Activated B cell treated with CpG ODN at 0.5 μM for 24 hours (primary cell): ENCODE measurements at regions of chr18 and their contacts with region 1.

Region 1: GRCh38 chr18:62186774-62187542 is at the starts of genes PIGN and RELCH:
- DNase-seq: peak; percentile 73
- ATAC-seq: peak; percentile 94
- H3K4me3 Mint-ChIP-seq: peak within 1 kb of the TSS; percentile 98
- H3K27ac Mint-ChIP-seq: peak within 1 kb of the TSS; percentile 95
- H3K4me1 Mint-ChIP-seq: peaks cover 58% of the 10 kb centered on the region
- H3K27me3 Mint-ChIP-seq: no peaks in the 10 kb centered on the region
- CTCF ChIP-seq: no peak
- total RNA-seq, gene PIGN: 26.4 and 29.4 TPM in 2 replicates
- total RNA-seq, gene RELCH: 45.4 and 59.0 TPM in 2 replicates

Region 2: GRCh38 chr18:62209046-62209445 is 22.1 kb after region 1 on chr18:
- CTCF ChIA-PET with region 1: no interaction called
- POLR2A ChIA-PET with region 1: no interaction called
- intact Hi-C with region 1: loop called (anchors 2 kb)
- DNase-seq: no peak
- ATAC-seq: no peak
- H3K4me3 Mint-ChIP-seq: no peak overlapping the region
- H3K27ac Mint-ChIP-seq: no peak overlapping the region
- H3K4me1 Mint-ChIP-seq: peaks cover 26% of the 10 kb centered on the region
- H3K27me3 Mint-ChIP-seq: no peaks in the 10 kb centered on the region
- CTCF ChIP-seq: no peak

Region 3: GRCh38 chr18:62287781-62288664 is 101.1 kb after region 1 on chr18:
- CTCF ChIA-PET with region 1: no interaction called
- POLR2A ChIA-PET with region 1: no interaction called
- intact Hi-C with region 1: loop called (anchors 1 kb)
- DNase-seq: no peak
- ATAC-seq: peak; percentile 9
- H3K4me3 Mint-ChIP-seq: peak overlapping the region; percentile 54
- H3K27ac Mint-ChIP-seq: peak overlapping the region; percentile 72
- H3K4me1 Mint-ChIP-seq: peaks cover 26% of the 10 kb centered on the region
- H3K27me3 Mint-ChIP-seq: no peaks in the 10 kb centered on the region
- CTCF ChIP-seq: no peak

Region 4: GRCh38 chr18:62505669-62506494 is 318.9 kb after region 1 on chr18:
- CTCF ChIA-PET with region 1: no interaction called
- POLR2A ChIA-PET with region 1: no interaction called
- intact Hi-C with region 1: loop called (anchors 1 kb)
- DNase-seq: no peak
- ATAC-seq: peak; percentile 84
- H3K4me3 Mint-ChIP-seq: peak overlapping the region; percentile 73
- H3K27ac Mint-ChIP-seq: peak overlapping the region; percentile 92
- H3K4me1 Mint-ChIP-seq: peaks cover 19% of the 10 kb centered on the region
- H3K27me3 Mint-ChIP-seq: no peaks in the 10 kb centered on the region
- CTCF ChIP-seq: no peak

Region 5: DNA sequence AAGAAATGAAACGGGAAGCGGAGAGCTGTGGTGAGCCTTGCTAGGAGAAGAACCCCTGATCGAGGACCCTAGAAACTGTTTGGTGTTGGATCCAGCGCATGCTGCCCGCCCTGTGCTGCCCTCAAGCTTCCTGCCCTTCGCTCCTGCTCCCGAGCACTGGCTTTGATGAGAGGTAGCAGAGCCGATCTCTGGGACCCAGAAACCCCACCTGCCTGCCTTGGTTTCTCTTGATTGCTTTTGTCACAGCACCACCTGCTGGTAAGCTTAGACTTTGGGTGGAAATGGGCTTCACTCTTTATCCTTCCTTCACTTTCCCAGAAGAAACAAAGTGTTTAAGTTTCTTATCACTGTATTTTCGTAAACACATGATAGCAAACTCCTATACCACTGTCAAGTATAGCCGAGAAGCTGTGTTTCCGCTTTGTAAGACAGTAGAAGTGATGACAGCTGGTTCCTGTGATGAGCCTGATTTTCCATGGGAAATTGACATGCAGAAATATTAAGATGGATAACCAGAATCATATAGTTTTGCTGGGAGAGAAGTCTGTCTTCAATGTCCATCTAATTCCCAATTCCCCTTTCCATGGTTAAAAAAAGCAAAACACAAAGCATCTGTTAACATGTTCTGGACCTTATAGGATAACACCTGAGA is 795.8 kb after region 1 on chr18:
- CTCF ChIA-PET with region 1: no interaction called
- POLR2A ChIA-PET with region 1: no interaction called
- intact Hi-C with region 1: loop called (anchors 2 kb)
- DNase-seq: peak; percentile 29
- ATAC-seq: peak; percentile 58
- H3K4me3 Mint-ChIP-seq: no peak overlapping the region
- H3K27ac Mint-ChIP-seq: no peak overlapping the region
- H3K4me1 Mint-ChIP-seq: peaks cover 6% of the 10 kb centered on the region
- H3K27me3 Mint-ChIP-seq: no peaks in the 10 kb centered on the region
- CTCF ChIP-seq: peak; percentile 60

Region 6: DNA sequence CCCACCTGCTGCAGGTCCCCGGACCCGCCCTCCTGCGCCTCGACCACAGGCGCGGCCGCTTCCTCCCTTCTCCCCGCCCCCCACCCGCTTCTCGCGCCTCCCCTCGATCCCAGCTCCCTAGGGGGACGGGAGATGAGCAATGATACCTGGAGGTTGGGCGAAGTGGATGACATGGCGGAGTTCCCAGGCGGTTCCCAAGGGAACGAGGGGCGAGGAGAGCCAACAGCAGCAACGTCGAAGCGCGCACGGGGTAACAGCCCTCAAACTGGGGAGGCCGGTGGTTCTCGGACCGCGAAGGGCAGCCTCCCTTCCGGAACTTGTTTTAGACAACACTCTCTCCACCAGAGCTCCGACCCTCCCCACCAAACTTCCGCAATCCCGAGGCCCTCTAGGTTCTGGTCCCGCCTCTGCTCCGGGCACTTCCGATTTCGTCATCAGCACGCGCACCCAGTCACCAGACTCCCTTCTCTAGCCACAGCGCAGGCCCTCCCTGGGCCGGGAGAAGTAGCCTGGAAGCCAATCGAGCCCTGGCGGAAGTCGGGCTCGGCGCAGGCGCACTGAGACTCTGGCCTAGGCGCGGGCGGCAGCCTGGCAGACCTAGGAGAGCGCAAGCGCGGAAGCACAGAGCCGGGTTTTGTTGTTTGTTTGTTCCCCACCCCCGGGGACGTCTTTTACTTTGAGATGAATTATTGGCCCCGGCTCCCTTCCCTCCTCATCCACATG is 1235.3 kb after region 1 on chr18 and contains the start of gene VPS4B:
- CTCF ChIA-PET with region 1: no interaction called
- POLR2A ChIA-PET with region 1: interaction called, 6 read pairs
- intact Hi-C with region 1: loop called (anchors 1 kb)
- DNase-seq: peak; percentile 100
- ATAC-seq: peak; percentile 96
- H3K4me3 Mint-ChIP-seq: peak within 1 kb of the TSS; percentile 99
- H3K27ac Mint-ChIP-seq: peak within 1 kb of the TSS; percentile 98
- H3K4me1 Mint-ChIP-seq: peaks cover 37% of the 10 kb centered on the region
- H3K27me3 Mint-ChIP-seq: peaks cover 2% of the 10 kb centered on the region
- CTCF ChIP-seq: no peak
- total RNA-seq, gene VPS4B: 66.2 and 66.8 TPM in 2 replicates